ENCODE measurements at regions of chr1 and their contacts with region 1.

Region 1: GRCh38 chr1:151790071-151790940 is at the start of gene TDRKH:
- DNase-seq: peak; percentile 93 to 99 (median 99)
- ATAC-seq: peak; percentile 97
- H3K4me3 ChIP-seq: peak within 1 kb of the TSS; percentile 88
- H3K4me3 Mint-ChIP-seq: peak within 1 kb of the TSS; percentile 91 to 99 (median 97)
- H3K27ac ChIP-seq: peak within 1 kb of the TSS; percentile 60
- H3K27ac Mint-ChIP-seq: peak within 1 kb of the TSS; percentile 75 to 93 (median 89)
- H3K4me1 ChIP-seq: peaks cover 0 to 14% of the 10 kb centered on the region in 2 donors
- H3K4me1 Mint-ChIP-seq: peaks cover 6 to 38% (median 30%) of the 10 kb centered on the region in 7 donors
- H3K27me3 ChIP-seq: no peaks in the 10 kb centered on the region
- H3K27me3 Mint-ChIP-seq: peaks cover 0 to 2% (median 0%) of the 10 kb centered on the region in 5 donors
- total RNA-seq, gene TDRKH: 7.7 to 23.1 (median 17.0) TPM

Region 2: DNA sequence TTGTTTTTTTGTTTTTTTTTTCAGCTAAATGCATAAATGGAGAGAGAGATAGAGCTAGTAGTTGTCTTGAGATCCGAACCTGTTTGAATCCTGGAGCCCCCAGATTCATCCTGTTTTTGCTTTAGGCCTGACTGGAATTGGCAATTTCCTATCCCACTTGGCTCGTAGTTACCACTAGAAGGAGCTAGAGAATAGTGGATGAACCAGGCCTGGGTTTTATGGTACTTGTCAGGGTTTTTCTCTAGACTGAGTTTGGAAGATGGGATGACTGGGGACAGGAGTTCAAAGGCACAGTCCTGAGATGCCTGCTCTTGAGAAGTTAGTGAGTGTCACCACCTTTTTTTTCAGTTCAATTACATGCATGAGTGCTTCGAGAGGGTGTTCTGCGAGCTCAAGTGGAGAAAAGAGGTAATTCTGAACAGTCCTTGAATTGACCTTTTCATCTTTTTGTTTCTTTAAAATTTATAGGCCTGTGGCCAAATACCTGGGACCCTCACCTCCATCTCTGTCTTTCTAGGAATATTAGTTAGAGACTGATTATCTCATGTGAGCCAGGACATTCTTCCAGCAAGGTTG is 97.1 kb before region 1 on chr1:
- CTCF ChIA-PET with region 1: no interaction called
- POLR2A ChIA-PET with region 1: no interaction called
- intact Hi-C with region 1: loop called in 1 of 2 experiments (anchors 5 kb)
- DNase-seq: no peak
- ATAC-seq: no peak
- H3K4me3 ChIP-seq: no peak overlapping the region
- H3K4me3 Mint-ChIP-seq: no peak overlapping the region
- H3K27ac ChIP-seq: no peak overlapping the region
- H3K27ac Mint-ChIP-seq: peak overlapping the region in 1 of 9 donors; percentile 17
- H3K4me1 ChIP-seq: no peaks in the 10 kb centered on the region
- H3K4me1 Mint-ChIP-seq: peaks cover 0 to 9% (median 0%) of the 10 kb centered on the region in 7 donors
- H3K27me3 ChIP-seq: no peaks in the 10 kb centered on the region
- H3K27me3 Mint-ChIP-seq: no peaks in the 10 kb centered on the region

Region 3: GRCh38 chr1:151762941-151763921 is 27.1 kb before region 1 on chr1 and contains the start of gene MRPL9:
- CTCF ChIA-PET with region 1: interaction called, 4 read pairs
- POLR2A ChIA-PET with region 1: interaction called, 24 read pairs
- intact Hi-C with region 1: loop called (anchors 1 kb)
- DNase-seq: peak; percentile 73 to 85 (median 82)
- ATAC-seq: peak; percentile 99
- H3K4me3 ChIP-seq: peak within 1 kb of the TSS; percentile 76
- H3K4me3 Mint-ChIP-seq: peak within 1 kb of the TSS; percentile 91 to 98 (median 95)
- H3K27ac ChIP-seq: peak within 1 kb of the TSS; percentile 81
- H3K27ac Mint-ChIP-seq: peak within 1 kb of the TSS; percentile 92 to 100 (median 97)
- H3K4me1 ChIP-seq: peaks cover 11 to 12% of the 10 kb centered on the region in 2 donors
- H3K4me1 Mint-ChIP-seq: peaks cover 13 to 28% (median 21%) of the 10 kb centered on the region in 7 donors
- H3K27me3 ChIP-seq: no peaks in the 10 kb centered on the region
- H3K27me3 Mint-ChIP-seq: no peaks in the 10 kb centered on the region
- total RNA-seq, gene MRPL9: 77.0 to 133 (median 81.5) TPM

Region 4: DNA sequence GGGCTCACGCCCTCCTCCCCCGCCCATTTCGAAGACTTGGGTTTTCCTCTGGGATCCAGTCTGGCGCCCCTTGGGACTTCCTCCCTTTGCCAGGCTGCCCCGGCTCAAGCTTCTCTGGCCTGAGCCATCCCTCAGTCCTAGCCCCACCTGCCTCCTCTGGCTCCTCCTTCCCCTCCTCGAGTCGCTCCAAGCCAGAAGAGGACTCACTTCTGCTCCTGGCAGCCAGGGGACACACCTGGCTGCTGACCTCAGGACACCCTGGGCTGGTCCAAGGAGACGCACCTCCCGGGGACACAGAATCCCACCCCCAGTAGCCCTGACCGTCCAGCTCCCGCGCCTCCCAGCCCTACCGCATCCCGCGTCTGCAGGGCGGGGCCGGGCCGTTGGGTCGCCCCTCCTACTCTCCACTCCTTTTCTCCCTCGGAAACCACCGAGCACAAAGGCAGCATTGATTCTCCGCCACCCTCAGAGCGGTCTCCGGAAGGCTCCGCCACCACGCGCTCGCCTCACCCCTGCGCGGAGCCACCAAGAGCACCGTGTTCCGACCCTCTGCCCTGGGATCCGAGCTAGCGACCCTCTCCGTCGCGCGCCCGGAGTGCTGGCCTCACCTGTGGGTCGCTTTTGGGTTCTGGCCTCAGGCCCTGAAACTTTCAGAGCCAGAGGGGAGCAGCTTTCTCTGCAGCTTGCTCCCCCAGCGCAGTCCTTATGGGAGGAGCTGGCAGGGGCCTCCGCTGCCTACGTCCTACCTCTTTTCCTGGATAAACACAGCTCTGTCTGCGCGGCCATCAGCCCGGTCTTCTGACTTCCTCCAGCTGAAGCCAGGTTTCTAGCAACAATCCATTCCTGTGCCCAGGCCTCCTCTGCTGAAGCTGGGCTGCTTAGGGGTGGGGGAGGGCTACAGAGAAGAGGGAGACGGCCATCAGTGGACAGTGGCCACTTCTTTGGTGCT is 49.4 kb after region 1 on chr1 and contains the start of gene C2CD4D:
- CTCF ChIA-PET with region 1: no interaction called
- POLR2A ChIA-PET with region 1: interaction called, 6 read pairs
- intact Hi-C with region 1: loop called (anchors 1 kb)
- DNase-seq: peak; percentile 42 to 77 (median 66)
- ATAC-seq: peak; percentile 89
- H3K4me3 ChIP-seq: peak within 1 kb of the TSS; percentile 68
- H3K4me3 Mint-ChIP-seq: peak within 1 kb of the TSS; percentile 68 to 89 (median 82)
- H3K27ac ChIP-seq: peak within 1 kb of the TSS; percentile 55
- H3K27ac Mint-ChIP-seq: peak within 1 kb of the TSS; percentile 31 to 87 (median 77)
- H3K4me1 ChIP-seq: peaks cover 27 to 38% of the 10 kb centered on the region in 2 donors
- H3K4me1 Mint-ChIP-seq: peaks cover 33 to 53% (median 40%) of the 10 kb centered on the region in 7 donors
- H3K27me3 ChIP-seq: no peaks in the 10 kb centered on the region
- H3K27me3 Mint-ChIP-seq: peaks cover 0 to 8% (median 0%) of the 10 kb centered on the region in 5 donors
- total RNA-seq, gene C2CD4D: 0.34 to 0.87 TPM in 2 of 5 experiments, not detected in the others

Region 5: DNA sequence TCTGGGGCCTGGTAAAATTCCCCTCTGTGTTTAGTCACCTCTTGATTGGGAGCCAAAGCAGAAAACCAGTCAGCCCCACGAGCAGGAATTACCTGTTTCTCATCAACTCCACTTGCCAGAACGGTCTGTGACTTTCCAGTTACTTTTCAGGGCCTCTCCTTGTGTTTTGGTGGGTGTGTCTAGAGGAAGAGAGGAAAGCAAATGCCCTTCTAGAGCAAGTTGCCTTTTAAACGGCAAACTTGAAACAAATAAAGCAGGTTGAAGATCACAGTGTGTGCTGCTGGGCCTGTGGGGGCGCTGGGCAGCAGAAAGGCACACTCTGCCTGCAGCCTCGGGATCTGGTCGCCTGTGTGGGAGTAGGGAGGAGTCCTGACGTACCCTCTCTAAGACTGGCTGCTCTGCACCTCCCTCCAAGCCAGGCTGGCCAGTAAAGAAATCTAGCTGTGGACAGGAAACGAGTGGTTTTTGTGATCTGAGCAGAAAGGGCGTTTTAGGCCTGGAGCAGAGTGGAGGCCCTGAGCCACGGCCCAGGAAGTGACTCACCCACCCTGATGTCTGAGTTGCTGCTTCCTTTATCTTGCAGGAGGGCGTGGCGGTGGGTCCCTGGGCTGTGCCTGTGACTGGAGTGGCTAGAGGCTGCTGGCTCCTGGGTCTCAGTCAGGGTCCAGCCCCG is 257.6 kb after region 1 on chr1:
- CTCF ChIA-PET with region 1: no interaction called
- POLR2A ChIA-PET with region 1: no interaction called
- intact Hi-C with region 1: loop called in 1 of 2 experiments (anchors 2 kb)
- DNase-seq: peak; percentile 57 to 82 (median 76)
- ATAC-seq: peak; percentile 93
- H3K4me3 ChIP-seq: peak overlapping the region; percentile 10
- H3K4me3 Mint-ChIP-seq: peak overlapping the region; percentile 56 to 87 (median 77)
- H3K27ac ChIP-seq: peak overlapping the region; percentile 81
- H3K27ac Mint-ChIP-seq: peak overlapping the region; percentile 92 to 98 (median 98)
- H3K4me1 ChIP-seq: peaks cover 19 to 21% of the 10 kb centered on the region in 2 donors
- H3K4me1 Mint-ChIP-seq: peaks cover 21 to 53% (median 30%) of the 10 kb centered on the region in 7 donors
- H3K27me3 ChIP-seq: no peaks in the 10 kb centered on the region
- H3K27me3 Mint-ChIP-seq: peaks cover 0 to 3% (median 0%) of the 10 kb centered on the region in 5 donors

Measured in naive thymus-derived CD4-positive, alpha-beta T cell (primary cell).